Activated CD8-positive, alpha-beta T cell treated with anti-CD3 and anti-CD28 coated beads for 36 hours (primary cell): ENCODE measurements at regions of chr5 and their contacts with region 1.

Region 1: DNA sequence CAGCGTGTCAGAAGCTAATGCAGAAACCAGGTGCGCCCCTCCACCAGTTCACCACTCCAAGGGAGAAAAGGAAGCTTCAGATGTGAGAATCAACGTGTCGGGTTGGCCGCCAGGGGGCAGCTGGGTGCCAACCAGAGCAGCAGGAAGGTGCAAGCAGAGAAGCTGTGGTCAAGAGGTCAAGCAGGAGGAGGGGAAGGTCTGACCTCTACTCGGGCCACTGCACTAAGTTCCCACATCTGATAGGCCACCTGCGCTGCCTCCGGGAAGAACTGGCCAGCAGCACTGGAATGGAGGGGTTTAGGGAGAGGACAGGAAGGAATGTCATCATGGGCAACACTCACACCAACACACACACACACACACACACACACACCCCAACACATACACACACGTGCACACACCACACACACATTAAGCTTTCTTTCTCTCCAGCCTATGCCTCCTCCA is 31.4 kb downstream of the ANXA6 start:
- DNase-seq: peak; percentile 79
- ATAC-seq: peak; percentile 27
- H3K4me3 Mint-ChIP-seq: peak overlapping the region; percentile 18
- H3K27ac Mint-ChIP-seq: peak overlapping the region; percentile 96
- H3K4me1 Mint-ChIP-seq: peaks cover 73% of the 10 kb centered on the region
- H3K27me3 Mint-ChIP-seq: no peaks in the 10 kb centered on the region
- CTCF ChIP-seq: peak; percentile 90

Region 2: GRCh38 chr5:151107738-151108508 is 18.3 kb before region 1 on chr5:
- CTCF ChIA-PET with region 1: interaction called, 19 read pairs
- POLR2A ChIA-PET with region 1: interaction called, 6 read pairs
- intact Hi-C with region 1: no loop called
- DNase-seq: no peak
- ATAC-seq: no peak
- H3K4me3 Mint-ChIP-seq: no peak overlapping the region
- H3K27ac Mint-ChIP-seq: no peak overlapping the region
- H3K4me1 Mint-ChIP-seq: no peaks in the 10 kb centered on the region
- H3K27me3 Mint-ChIP-seq: no peaks in the 10 kb centered on the region
- CTCF ChIP-seq: no peak

Region 3: DNA sequence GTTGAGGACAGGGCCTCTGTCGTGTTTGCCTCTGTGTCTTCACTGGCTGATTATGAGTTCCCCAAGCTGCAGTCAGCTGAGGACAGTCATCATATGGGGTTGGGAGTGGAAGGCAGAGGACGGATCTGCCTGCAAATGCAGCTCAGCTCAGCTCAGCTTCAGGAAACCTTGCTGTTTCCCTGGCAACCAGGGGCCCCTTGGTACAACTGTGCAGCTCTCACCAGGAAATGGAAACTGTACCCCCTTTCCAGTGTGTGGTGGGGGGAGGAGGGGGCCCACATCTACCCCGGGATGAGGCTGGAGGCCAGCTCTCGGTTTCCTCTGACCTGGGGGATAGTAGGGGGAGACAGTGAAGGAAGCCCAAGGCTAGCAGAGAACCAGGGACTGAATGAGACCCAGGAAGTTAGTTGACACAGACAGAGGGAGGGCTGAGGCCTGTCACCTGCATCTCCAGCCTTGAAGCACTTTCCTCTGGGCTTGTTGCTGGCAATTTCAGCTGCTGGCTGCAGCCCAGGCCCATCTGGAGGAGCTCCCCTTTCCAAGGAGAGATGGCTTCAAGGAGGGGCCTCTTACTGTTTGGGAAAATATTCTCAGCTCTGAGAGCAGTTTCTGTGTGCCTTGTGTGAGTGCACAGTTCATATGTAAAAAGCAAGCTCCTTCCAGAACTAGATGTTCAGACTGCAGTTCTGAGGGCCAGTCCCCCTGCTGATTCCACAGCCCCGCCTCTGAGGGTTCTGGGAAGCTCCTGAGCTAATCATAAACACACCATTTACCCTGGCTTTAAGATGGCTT is 24.4 kb after region 1 on chr5:
- CTCF ChIA-PET with region 1: interaction called, 114 read pairs
- POLR2A ChIA-PET with region 1: interaction called, 16 read pairs
- intact Hi-C with region 1: no loop called
- DNase-seq: peak; percentile 90
- ATAC-seq: peak; percentile 63
- H3K4me3 Mint-ChIP-seq: peak overlapping the region; percentile 49
- H3K27ac Mint-ChIP-seq: peak overlapping the region; percentile 89
- H3K4me1 Mint-ChIP-seq: peaks cover 92% of the 10 kb centered on the region
- H3K27me3 Mint-ChIP-seq: no peaks in the 10 kb centered on the region
- CTCF ChIP-seq: no peak

Region 4: GRCh38 chr5:151164686-151165392 is 38.6 kb after region 1 on chr5:
- CTCF ChIA-PET with region 1: interaction called, 413 read pairs
- POLR2A ChIA-PET with region 1: interaction called, 13 read pairs
- intact Hi-C with region 1: loop called (anchors 1 kb)
- DNase-seq: peak; percentile 89
- ATAC-seq: peak; percentile 97
- H3K4me3 Mint-ChIP-seq: no peak overlapping the region
- H3K27ac Mint-ChIP-seq: no peak overlapping the region
- H3K4me1 Mint-ChIP-seq: peaks cover 17% of the 10 kb centered on the region
- H3K27me3 Mint-ChIP-seq: no peaks in the 10 kb centered on the region
- CTCF ChIP-seq: peak; percentile 92

Region 5: DNA sequence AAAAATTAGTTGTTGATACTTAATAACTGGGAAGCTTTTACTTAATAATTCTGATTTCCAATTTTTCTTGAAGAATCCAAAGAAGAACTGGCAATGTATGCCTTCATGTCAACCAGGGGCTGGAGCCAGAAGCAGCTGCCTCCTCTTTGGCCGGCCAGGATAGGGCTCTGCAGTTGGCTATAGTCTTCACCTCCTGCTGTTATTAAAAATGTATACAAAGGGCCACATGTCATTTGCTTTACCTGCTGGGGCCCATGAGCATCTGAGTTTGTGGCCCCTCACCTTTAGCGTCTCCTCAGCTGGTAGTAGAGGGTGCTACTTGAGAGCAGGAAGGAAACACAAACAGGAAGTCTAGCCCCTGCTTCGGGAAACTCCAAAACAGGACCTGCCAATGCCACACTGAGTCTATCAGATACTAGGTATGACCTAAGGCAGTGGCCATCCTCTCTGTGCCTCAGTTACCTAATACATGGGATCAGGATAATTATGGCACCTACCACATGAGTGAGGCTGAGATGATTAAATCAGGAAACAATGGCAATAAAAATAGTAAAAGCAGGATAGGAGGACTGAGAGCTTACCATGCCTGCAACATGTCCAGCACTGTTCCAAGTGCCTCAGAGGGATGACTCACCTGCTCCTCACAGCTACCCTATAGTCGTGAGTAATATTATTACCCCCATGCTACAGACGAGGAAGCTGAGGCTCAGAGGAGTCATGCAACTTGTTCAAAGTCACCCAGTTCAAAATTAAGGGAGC is 76.3 kb after region 1 on chr5:
- CTCF ChIA-PET with region 1: interaction called, 11 read pairs
- POLR2A ChIA-PET with region 1: no interaction called
- intact Hi-C with region 1: no loop called
- DNase-seq: peak; percentile 70
- ATAC-seq: peak; percentile 96
- H3K4me3 Mint-ChIP-seq: no peak overlapping the region
- H3K27ac Mint-ChIP-seq: peak overlapping the region; percentile 91
- H3K4me1 Mint-ChIP-seq: peaks cover 46% of the 10 kb centered on the region
- H3K27me3 Mint-ChIP-seq: no peaks in the 10 kb centered on the region
- CTCF ChIP-seq: no peak

Region 6: DNA sequence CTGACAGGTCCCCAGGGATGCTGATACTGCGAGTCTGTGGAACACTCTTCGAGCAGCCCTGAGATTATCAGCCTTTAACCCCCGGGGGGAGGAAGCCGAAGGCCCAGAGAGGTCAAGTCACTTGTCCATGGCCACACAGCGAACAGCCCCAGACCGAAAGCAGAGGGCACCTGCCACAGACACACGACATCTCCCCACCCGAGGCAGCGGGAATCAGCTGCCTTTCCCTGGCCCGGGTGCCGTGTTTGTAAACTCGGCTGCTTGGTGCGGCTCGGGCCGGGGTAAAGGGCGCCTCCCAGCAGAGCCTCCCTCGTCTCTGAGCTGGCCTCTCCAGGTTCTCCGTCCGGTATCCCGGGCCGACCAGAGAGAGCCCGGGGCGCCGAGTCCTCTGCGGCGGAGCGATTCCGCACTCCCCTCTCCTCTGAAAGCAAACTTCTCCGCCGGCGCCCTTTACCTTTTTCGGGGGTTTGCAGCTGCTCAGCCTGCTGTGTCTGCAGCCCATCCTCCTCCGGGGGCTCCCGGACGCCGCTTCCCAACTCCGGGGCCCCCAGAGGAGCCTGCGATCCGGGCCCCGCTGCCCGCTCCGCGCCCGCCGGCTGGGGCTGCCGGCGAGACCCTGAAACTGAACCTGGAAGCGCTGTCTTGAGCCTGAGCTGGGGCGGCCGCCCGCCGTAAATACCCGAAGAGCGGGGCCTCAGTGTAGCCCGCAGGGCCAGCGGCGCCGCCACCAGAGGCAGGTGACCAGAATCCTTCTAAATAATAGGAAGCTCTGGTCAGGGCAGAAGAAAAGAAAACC is 97.4 kb after region 1 on chr5 and contains the start of gene CCDC69:
- CTCF ChIA-PET with region 1: interaction called, 10 read pairs
- POLR2A ChIA-PET with region 1: no interaction called
- intact Hi-C with region 1: no loop called
- DNase-seq: peak; percentile 75
- ATAC-seq: peak; percentile 52
- H3K4me3 Mint-ChIP-seq: peak within 1 kb of the TSS; percentile 92
- H3K27ac Mint-ChIP-seq: peak within 1 kb of the TSS; percentile 94
- H3K4me1 Mint-ChIP-seq: peaks cover 55% of the 10 kb centered on the region
- H3K27me3 Mint-ChIP-seq: no peaks in the 10 kb centered on the region
- CTCF ChIP-seq: no peak
- total RNA-seq, gene CCDC69: 33.0 to 34.5 TPM

Region 7: DNA sequence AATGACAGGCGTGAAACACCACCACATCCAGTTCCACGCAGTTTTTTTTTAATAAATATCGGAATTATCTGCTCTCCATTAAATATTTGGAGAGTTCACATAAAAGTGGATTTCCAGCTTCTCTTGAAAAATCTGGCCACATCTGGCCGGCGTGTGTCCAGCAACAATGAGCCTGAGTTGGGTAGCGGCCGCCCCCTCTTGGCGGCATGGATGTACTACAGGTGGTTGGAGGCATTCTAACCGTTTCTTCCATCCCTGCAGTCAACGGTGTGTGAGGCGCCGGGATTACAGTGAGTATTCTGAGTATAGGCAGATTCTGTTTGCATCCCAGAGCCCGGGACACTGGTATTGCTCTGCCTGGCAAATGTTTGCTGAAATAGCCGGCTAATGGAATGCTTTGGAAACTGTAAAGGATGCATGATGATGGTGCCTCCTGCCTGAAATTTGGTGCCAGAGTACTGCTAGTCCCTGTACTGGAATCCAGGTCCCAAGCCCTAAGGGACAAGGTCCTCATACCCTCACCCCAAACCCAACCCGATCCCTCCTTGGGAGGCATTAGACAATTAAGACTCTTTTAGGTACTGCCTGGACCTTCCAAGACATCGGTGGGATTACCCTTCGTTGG is 113.1 kb after region 1 on chr5:
- CTCF ChIA-PET with region 1: interaction called, 57 read pairs
- POLR2A ChIA-PET with region 1: interaction called, 3 read pairs
- intact Hi-C with region 1: no loop called
- DNase-seq: peak; percentile 78
- ATAC-seq: peak; percentile 85
- H3K4me3 Mint-ChIP-seq: peak overlapping the region; percentile 21
- H3K27ac Mint-ChIP-seq: peak overlapping the region; percentile 13
- H3K4me1 Mint-ChIP-seq: peaks cover 37% of the 10 kb centered on the region
- H3K27me3 Mint-ChIP-seq: no peaks in the 10 kb centered on the region
- CTCF ChIP-seq: peak; percentile 98